Activated naive CD4-positive, alpha-beta T cell treated with anti-CD3 and anti-CD28 coated beads for 36 hours (primary cell): ENCODE measurements at regions of chr15 and their contacts with region 1.

Region 1: DNA sequence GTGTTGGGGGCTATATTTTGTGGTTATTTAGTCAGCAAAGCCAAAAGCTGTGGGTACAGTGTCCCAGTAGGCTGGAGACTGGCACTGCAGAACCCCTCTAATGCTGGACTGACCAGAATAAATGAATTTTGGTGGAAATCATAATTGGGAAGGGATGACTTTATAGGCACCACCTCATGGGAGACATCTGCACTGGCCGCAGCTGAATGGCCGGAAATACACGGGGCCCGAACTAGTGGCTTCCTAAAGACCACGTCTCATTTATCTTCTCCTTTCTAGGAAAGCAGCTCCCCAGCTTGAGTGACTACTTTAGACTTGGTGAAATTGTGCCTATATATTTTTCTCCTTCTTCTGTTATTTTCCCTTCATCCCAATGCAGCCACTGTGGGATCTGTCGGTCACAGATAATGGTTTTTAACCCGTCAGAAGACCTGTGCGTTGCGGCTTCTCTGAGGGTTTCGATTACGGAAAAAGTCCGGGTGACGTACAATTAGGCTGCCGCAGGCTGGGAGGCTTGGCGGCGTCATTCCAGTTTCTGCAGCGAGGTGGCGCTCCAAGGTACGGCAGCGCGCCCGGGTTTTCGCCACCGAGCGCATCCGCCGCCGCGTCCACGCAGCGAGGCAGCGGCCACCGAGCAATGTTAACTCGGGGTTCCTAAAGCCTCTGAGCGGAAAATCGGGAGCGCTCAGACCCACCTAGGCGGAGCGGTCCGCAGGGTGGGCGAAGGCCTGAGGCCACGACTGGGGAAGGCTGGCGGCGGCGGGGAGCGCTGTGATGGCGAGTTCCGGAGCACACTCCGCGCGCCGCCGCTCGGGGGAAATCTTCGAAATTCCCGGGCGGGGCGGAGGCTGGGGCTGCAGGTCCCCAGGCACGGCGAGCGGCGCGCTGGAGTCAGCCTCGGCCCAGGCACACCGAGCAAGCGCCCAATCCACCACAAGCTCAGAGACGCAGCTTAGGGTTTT is 26.3 kb downstream of the NR2F2 start:
- DNase-seq: peak; percentile 82
- H3K4me3 Mint-ChIP-seq: peak overlapping the region; percentile 75
- H3K27ac Mint-ChIP-seq: no peak overlapping the region
- H3K4me1 Mint-ChIP-seq: peaks cover 28% of the 10 kb centered on the region
- H3K27me3 Mint-ChIP-seq: peaks cover 65% of the 10 kb centered on the region

Region 2: DNA sequence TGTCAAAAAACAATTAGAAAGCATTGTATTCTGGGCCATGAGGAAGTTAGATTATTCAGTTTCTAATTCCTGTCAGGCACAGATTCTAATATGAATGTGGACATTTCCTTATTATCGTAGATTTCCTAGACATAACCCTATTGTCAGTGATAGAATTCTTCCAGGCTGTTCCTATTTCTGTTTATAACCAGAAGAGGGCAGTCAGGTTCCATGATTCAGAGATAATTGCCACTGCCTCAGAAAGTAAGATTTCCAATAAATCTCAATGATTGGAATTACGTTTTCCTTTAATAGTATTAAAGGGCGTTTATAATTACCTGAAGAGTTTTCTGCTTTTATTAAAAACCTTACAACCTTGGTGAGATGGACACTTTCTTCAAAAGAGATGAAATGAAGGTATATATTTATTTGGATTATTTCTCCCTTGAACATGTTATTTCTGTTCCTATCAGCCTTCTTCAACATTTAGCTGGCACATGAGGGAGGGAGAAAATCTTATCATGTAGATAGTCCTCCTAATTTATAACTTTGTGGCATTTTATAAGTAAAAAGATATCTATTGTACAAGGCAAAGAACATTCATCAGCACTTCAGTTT is 1686.2 kb before region 1 on chr15:
- CTCF ChIA-PET with region 1: no interaction called
- intact Hi-C with region 1: loop called (anchors 10 kb)
- DNase-seq: no peak
- H3K4me3 Mint-ChIP-seq: no peak overlapping the region
- H3K27ac Mint-ChIP-seq: no peak overlapping the region
- H3K4me1 Mint-ChIP-seq: no peaks in the 10 kb centered on the region
- H3K27me3 Mint-ChIP-seq: peaks cover 12% of the 10 kb centered on the region

Region 3: DNA sequence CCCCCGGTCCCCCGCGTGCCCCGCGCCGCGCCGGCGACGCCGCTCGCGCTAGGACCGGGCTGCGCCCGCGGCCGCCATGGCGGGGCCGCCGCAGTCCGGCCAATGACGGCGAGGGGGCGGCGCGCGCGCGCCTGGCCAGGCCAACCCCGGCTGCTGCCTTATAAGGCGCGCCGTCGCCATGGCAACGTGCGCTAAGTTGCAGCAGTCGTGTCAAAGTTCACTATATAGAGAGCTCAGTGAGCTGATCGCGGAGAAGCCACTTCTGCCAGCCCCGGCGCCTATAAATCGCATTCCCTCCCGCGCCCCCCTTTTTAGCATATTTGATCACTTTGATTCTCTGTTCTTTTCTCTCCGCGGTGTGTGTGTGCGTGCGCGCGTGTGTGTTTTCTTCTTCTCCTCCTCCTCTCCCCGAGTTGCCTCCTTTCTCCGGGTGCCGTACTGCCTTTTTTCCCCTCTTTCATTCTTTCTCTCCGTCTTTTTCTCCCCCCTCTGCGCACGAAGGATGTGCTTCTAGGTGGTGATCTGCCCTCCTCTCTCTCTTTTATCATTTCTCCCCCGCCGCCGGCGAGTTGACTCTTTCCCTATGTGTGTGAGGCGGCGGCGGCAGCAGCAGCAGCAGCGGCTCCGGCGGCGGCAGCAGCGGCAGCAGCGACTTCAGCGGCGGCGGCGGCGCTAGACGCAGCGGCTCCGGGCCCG is 26.2 kb before region 1 on chr15 and contains the start of gene NR2F2:
- CTCF ChIA-PET with region 1: interaction called, 4 read pairs
- intact Hi-C with region 1: loop called (anchors 2 kb)
- DNase-seq: peak; percentile 66
- H3K4me3 Mint-ChIP-seq: peak within 1 kb of the TSS; percentile 77
- H3K27ac Mint-ChIP-seq: no peak within 1 kb of the TSS
- H3K4me1 Mint-ChIP-seq: peaks cover 28% of the 10 kb centered on the region
- H3K27me3 Mint-ChIP-seq: peaks cover 79% of the 10 kb centered on the region
- total RNA-seq, gene NR2F2: not detected

Region 4: GRCh38 chr15:96413657-96414056 is 56.9 kb after region 1 on chr15:
- CTCF ChIA-PET with region 1: no interaction called
- intact Hi-C with region 1: loop called (anchors 2 kb)
- DNase-seq: no peak
- H3K4me3 Mint-ChIP-seq: no peak overlapping the region
- H3K27ac Mint-ChIP-seq: no peak overlapping the region
- H3K4me1 Mint-ChIP-seq: peaks cover 11% of the 10 kb centered on the region
- H3K27me3 Mint-ChIP-seq: peaks cover 71% of the 10 kb centered on the region

Region 5: DNA sequence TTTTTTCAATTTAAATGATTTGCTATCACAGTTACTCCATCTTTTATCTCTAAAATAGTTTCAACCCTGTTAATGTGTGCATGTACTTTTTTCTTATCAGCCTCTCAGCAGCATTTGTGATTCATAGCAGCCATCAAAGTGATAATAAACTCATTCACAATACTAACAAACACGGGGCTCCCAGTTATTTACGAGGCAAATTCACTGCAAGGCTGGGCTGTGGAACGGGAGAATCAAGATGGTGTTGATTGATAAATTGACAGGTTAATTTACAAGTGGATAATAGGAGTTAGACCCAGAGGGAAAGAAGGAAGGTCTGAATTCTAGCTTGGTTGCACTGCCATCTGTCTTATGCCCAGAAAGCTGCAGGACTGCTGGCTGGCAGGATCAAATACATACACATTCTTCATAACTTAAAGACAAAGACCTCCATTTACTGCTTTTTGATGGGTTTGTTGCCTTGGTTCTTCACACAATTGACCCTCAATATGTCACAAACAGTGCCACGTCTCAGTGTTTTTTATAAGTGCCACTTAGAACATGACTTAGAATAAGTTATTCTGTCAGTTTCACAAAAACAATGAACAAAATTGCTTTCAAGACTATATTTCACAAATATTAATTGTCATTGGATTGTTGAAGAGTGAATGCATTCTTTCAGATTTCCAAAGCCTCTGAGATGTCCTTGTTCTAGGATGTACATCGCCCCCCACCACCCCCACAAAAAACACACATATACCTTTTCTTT is 536.6 kb after region 1 on chr15:
- CTCF ChIA-PET with region 1: no interaction called
- intact Hi-C with region 1: loop called (anchors 1 kb)
- DNase-seq: peak; percentile 6
- H3K4me3 Mint-ChIP-seq: no peak overlapping the region
- H3K27ac Mint-ChIP-seq: no peak overlapping the region
- H3K4me1 Mint-ChIP-seq: peaks cover 13% of the 10 kb centered on the region
- H3K27me3 Mint-ChIP-seq: peaks cover 3% of the 10 kb centered on the region

Region 6: GRCh38 chr15:97234851-97235610 is 878.3 kb after region 1 on chr15:
- CTCF ChIA-PET with region 1: no interaction called
- intact Hi-C with region 1: loop called (anchors 1 kb)
- DNase-seq: peak; percentile 55
- H3K4me3 Mint-ChIP-seq: no peak overlapping the region
- H3K27ac Mint-ChIP-seq: no peak overlapping the region
- H3K4me1 Mint-ChIP-seq: peaks cover 2% of the 10 kb centered on the region
- H3K27me3 Mint-ChIP-seq: peaks cover 20% of the 10 kb centered on the region